ENCODE measurements at regions of chr7 and their contacts with region 1.

Region 1: DNA sequence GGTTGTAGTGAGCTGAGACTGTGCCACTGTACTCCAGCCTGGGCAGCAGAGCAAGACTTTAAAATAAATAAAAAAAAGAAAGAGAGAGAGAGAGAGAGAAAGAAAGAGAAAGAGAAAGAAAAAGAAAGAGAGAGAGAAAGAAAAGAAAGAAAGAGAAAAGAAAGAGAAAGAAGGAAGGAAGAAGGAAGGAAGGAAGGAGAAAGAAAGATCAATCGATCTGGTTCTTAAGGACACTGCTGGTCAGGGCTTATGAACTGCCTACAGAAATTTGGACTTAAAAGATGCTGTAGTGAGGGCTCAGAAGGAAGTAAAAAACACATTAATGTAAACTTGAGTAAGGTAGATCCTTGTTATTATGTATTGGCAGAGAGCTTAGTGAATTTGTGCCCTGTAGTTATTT is 62.4 kb downstream of the COPG2 start:
- DNase-seq: no peak

Region 2: GRCh38 chr7:129122751-129123509 is 1483.2 kb before region 1 on chr7:
- intact Hi-C with region 1: loop called in 1 of 2 experiments (anchors 5 kb)
- DNase-seq: no peak

Region 3: DNA sequence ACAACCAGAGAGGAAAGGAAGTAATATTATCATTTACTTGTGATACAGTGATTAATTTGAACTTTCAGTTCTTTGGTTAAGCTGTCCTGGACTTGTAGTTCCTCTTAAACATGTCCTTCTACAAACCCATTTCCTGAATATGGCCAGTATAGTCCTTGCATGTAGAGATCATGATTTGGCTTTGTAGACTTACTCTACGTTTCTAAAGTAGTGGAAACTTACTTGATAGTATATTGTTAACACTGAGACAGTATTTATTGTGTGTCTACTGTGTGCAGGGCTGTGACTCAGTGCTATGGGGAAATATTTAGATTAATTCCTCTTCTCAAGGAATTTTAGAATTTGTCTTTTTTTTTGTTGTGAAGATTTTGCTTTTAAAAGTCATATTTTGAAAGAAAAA is 885.1 kb before region 1 on chr7:
- intact Hi-C with region 1: no loop called
- DNase-seq: no peak